Mammary epithelial cell (primary cell): ENCODE measurements at regions of chr3 and their contacts with region 1.

Region 1: DNA sequence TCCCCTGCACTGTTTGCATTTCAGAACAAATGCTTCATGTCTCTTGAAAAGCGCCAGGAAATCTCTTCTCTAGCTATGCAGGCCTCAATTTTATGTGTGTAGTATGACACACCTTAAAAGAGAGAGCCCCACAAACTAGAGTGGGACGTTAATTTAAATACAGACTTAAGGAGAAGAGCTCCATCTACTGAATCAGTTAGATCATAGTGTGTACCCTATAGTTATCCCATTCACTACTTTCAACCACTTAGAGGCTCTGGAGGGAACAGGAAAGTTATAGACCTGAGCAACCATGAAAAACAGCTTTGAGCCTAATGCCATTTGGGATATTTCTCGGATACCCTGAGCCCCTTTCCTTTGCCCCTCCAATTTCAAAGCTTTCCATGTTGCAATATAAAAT is 153.7 kb downstream of the TIGIT start:
- DNase-seq: peak; percentile 57
- H3K4me3 ChIP-seq: peak overlapping the region in 2 of 3 experiments; percentile 51
- H3K27ac ChIP-seq: peak overlapping the region; percentile 96
- H3K4me1 ChIP-seq: peaks cover 37% of the 10 kb centered on the region
- H3K27me3 ChIP-seq: no peaks in the 10 kb centered on the region
- CTCF ChIP-seq: peak in 1 of 2 donors; percentile 19

Region 2: DNA sequence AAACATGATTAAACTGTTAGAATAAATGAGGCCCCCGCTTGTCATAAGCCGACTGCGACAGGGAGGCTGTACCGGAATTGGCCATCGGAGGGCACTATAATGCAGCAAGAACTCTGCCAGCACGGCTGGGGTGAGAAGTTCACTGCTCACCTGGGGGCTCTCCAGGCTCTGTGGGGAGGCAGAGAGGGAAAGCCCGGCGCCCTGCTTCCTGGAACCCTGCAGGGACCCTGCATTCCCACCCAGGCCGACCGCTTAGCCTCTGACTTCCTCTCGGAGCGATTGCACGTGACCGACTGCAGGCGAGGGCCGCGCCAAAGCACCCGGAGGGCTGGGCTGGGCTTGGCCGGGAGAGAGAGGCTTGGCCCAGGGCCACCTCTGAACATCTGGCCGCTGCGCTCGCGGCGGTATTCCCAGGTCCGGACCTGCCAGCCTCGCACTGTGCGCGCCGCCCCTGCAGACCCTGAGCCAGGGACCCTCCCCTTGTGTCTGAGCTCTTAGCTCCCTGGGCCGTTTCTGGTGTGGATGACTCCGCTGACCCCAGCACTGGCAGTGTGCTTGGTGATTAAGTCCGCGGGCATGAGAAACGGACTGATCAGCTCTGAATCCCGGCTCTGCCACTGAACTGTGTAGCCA is 294.9 kb before region 1 on chr3:
- CTCF ChIA-PET with region 1: no interaction called
- dilution Hi-C with region 1: no loop called
- in situ Hi-C with region 1: no loop called
- intact Hi-C with region 1: loop called (anchors 10 kb)
- DNase-seq: peak; percentile 72
- H3K4me3 ChIP-seq: peak overlapping the region; percentile 32 to 56 (median 49)
- H3K27ac ChIP-seq: no peak overlapping the region
- H3K4me1 ChIP-seq: peaks cover 5% of the 10 kb centered on the region
- H3K27me3 ChIP-seq: no peaks in the 10 kb centered on the region
- CTCF ChIP-seq: peak; percentile 93 to 94

Region 3: GRCh38 chr3:114290911-114291901 is 156.3 kb before region 1 on chr3:
- CTCF ChIA-PET with region 1: no interaction called
- dilution Hi-C with region 1: no loop called
- in situ Hi-C with region 1: no loop called
- intact Hi-C with region 1: loop called (anchors 2 kb)
- DNase-seq: peak; percentile 14
- H3K4me3 ChIP-seq: no peak overlapping the region
- H3K27ac ChIP-seq: no peak overlapping the region
- H3K4me1 ChIP-seq: no peaks in the 10 kb centered on the region
- H3K27me3 ChIP-seq: no peaks in the 10 kb centered on the region
- CTCF ChIP-seq: peak; percentile 75 to 83

Region 4: DNA sequence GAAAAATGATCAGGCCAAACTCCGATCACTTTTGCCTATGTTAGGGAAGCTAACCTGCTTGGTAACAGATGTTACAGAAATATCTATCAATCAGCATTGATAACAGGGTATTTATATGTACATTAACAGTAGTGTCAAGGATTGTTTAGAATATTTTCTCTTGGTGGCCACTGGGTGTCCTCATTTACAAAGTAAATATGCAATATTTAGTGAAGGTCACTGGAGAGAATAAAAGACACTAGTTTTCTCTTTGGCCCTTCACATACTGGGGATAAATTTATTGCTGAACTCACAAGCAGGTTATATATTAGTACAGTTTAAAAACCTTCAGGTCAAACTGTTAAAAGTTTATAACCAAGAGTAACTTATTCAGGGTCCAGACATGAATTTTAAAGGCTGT is 84.7 kb before region 1 on chr3:
- CTCF ChIA-PET with region 1: no interaction called
- dilution Hi-C with region 1: no loop called
- in situ Hi-C with region 1: no loop called
- intact Hi-C with region 1: loop called (anchors 5 kb)
- DNase-seq: peak; percentile 21
- H3K4me3 ChIP-seq: no peak overlapping the region
- H3K27ac ChIP-seq: no peak overlapping the region
- H3K4me1 ChIP-seq: peaks cover 6% of the 10 kb centered on the region
- H3K27me3 ChIP-seq: no peaks in the 10 kb centered on the region
- CTCF ChIP-seq: peak; percentile 40 to 47

Region 5: DNA sequence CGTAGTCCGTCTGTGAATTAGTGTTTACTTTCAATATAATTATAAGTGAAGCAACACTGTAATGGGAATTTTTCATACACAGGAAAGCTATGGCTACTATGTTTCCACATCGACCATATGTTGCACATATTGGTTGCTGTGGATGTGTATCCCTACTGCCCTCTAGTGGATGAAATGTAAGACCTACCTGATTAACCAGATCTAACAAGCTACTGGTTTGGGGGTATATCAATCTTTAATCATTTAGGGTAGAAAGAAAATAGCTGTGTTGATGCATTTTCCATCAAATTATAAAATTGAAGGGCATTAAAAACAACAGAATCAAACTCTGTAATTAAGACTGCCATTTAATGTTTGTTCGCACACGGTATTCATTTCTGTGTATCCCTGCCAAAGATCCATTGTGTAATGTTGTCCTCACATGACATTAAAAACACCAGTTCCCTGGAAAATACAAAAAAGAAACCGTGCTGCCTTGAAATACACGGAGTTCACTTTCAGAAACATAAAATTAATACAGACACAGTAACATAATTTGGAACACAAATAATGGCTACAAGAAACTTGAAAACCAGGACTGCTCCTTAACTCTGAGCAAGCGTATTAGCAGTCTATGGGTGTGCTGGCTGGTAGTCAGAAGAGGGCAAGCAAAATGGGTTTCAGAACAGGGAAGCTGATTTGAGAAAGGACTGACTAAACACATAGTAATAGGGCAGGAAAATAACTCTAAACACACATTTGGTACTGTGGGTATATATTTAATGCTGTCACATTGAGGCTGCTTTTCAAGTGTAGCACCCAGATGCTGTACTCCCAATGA is 28.6 kb before region 1 on chr3:
- CTCF ChIA-PET with region 1: interaction called, 4 read pairs
- dilution Hi-C with region 1: no loop called
- in situ Hi-C with region 1: no loop called
- intact Hi-C with region 1: loop called (anchors 1 kb)
- DNase-seq: peak; percentile 76
- H3K4me3 ChIP-seq: peak overlapping the region in 1 of 3 experiments; percentile 8
- H3K27ac ChIP-seq: peak overlapping the region; percentile 58
- H3K4me1 ChIP-seq: peaks cover 10% of the 10 kb centered on the region
- H3K27me3 ChIP-seq: no peaks in the 10 kb centered on the region
- CTCF ChIP-seq: peak; percentile 69 to 78

Region 6: DNA sequence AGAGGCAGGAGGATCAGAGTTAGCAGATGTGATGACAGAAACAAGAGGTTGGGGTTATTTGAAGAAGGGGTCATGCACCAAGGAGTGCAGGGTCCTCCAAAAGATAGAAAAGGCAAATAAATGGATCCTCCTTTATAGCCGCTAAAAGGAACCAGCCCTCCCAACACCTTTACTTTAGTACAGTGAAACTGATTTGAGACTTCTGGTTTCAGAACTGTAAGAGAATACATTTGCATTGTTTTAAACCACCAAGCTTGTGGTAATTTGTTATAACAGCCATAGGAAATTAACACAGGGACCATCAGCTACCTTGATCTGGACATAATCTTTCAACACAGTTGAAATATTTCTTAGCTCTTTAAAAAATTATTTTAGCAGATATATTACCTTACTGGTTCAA is 12.9 kb after region 1 on chr3:
- CTCF ChIA-PET with region 1: no interaction called
- dilution Hi-C with region 1: no loop called
- in situ Hi-C with region 1: no loop called
- intact Hi-C with region 1: no loop called
- DNase-seq: no peak
- H3K4me3 ChIP-seq: no peak overlapping the region
- H3K27ac ChIP-seq: no peak overlapping the region
- H3K4me1 ChIP-seq: no peaks in the 10 kb centered on the region
- H3K27me3 ChIP-seq: no peaks in the 10 kb centered on the region
- CTCF ChIP-seq: no peak

Region 7: GRCh38 chr3:114706591-114707232 is 259.2 kb after region 1 on chr3:
- CTCF ChIA-PET with region 1: no interaction called
- dilution Hi-C with region 1: no loop called
- in situ Hi-C with region 1: no loop called
- intact Hi-C with region 1: loop called (anchors 5 kb)
- DNase-seq: peak; percentile 97
- H3K4me3 ChIP-seq: no peak overlapping the region
- H3K27ac ChIP-seq: peak overlapping the region; percentile 91
- H3K4me1 ChIP-seq: peaks cover 20% of the 10 kb centered on the region
- H3K27me3 ChIP-seq: no peaks in the 10 kb centered on the region
- CTCF ChIP-seq: no peak

Region 8: GRCh38 chr3:115147329-115148141 is 700.0 kb after region 1 on chr3:
- CTCF ChIA-PET with region 1: no interaction called
- dilution Hi-C with region 1: no loop called
- in situ Hi-C with region 1: no loop called
- intact Hi-C with region 1: loop called (anchors 2 kb)
- DNase-seq: peak; percentile 100
- H3K4me3 ChIP-seq: peak overlapping the region; percentile 67 to 87 (median 74)
- H3K27ac ChIP-seq: peak overlapping the region; percentile 74
- H3K4me1 ChIP-seq: peaks cover 13% of the 10 kb centered on the region
- H3K27me3 ChIP-seq: no peaks in the 10 kb centered on the region
- CTCF ChIP-seq: no peak